ENCODE measurements at regions of chr3 and their contacts with region 1.

Region 1: GRCh38 chr3:14461748-14462324 is 59.4 kb downstream of the SLC6A6 start:
- ATAC-seq: peak; percentile 61 to 95 (median 86)
- H3K4me3 ChIP-seq: no peak overlapping the region
- H3K27ac ChIP-seq: no peak overlapping the region
- H3K4me1 ChIP-seq: peaks cover 0 to 7% of the 10 kb centered on the region in 2 donors

Region 2: DNA sequence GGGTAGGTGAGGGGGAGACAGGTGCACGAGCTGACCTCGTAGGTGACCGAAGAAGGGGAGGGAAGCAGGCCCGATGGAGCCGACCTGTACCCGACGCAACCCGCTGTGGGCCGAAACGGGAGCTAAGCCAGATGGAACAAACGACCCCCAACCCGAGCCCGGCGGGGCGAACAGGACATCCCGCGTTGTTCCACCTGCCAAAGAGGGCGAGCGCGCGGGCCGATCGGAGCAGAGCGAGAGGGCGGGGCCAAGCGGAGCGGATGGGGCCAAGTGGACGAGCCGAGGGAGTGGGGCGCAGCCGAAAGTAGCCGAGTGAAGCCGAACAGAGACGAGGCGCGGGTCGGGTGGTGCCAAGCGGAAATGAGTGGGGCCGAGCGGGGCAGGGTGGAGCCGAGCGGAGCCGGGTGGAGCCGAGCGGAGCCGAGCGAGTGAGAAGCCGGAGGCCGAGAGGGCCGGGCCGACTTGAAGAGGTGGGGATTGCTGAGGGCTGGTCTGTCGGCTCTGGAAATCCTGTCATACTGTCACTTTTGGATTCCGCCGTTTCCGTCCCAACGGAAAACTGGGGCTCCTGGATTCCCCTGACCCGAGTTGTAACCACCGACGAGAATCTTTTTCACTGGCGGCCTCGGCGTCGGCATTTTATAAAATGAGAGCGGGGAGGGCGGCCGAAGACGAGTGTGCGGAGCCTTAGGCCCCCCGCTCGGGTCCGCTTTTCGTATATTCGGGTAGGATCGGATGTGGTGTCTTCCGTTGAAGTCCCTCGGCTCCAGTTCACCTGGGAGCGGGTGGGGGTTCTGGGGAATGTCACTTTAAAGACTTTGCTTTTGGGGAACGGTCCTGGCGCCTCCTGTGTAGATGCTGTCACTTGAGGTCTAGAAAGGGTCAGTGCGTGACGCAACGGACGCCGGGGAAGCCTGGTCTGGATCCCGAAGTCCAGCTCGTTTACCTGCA is 566.4 kb before region 1 on chr3:
- in situ Hi-C with region 1: loop called in 2 of 9 experiments (anchors 10 to 25 kb)
- ATAC-seq: peak; percentile 95 to 99 (median 98)
- H3K4me3 ChIP-seq: peak overlapping the region; percentile 36 to 52 (median 45)
- H3K27ac ChIP-seq: no peak overlapping the region
- H3K4me1 ChIP-seq: peaks cover 4 to 13% of the 10 kb centered on the region in 2 donors

Region 3: DNA sequence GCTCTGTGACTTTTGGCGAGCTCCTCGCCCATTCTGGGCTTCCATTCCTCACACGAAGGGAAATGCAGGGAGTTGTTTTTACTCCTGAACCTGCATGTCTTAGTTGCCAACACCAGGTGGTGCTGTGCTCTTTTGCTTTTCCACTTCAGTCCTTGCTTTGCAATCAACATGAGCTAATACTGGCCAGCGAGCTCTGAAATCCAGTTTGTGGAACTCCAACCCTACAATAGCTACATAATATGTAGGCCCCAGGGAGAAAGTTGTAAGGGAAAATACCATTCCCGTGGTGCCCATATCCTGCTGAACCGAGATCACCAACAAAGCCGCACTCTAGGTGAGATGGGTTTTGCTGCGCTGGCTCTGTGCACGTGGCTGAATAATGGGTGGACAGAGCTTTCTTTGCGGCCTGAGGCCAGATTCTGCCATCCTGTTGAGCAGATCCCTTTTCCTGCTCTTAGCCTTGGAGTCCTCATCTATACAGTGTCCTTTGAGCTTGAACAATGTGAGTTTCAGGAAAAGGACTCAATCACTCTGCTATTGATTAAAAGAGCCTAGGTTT is 258.2 kb before region 1 on chr3:
- in situ Hi-C with region 1: loop called in 2 of 9 experiments (anchors 5 to 10 kb)
- ATAC-seq: peak; percentile 74 to 83 (median 79)
- H3K4me3 ChIP-seq: no peak overlapping the region
- H3K27ac ChIP-seq: no peak overlapping the region
- H3K4me1 ChIP-seq: peaks cover 5 to 6% of the 10 kb centered on the region in 2 donors

Region 4: GRCh38 chr3:14261229-14261628 is 200.6 kb before region 1 on chr3:
- in situ Hi-C with region 1: loop called (anchors 10 to 25 kb)
- ATAC-seq: peak; percentile 83 to 96 (median 88)
- H3K4me3 ChIP-seq: no peak overlapping the region
- H3K27ac ChIP-seq: no peak overlapping the region
- H3K4me1 ChIP-seq: peaks cover 6 to 13% of the 10 kb centered on the region in 2 donors

Measured in motor neuron (in vitro differentiated cells).